Ascending aorta (tissue), 2 donors: ENCODE measurements at regions of chr2 and their contacts with region 1.

Region 1: GRCh38 chr2:201795607-201796477 is 10.5 kb upstream of the CDK15 start:
- DNase-seq: no peak
- H3K4me3 ChIP-seq: no peak overlapping the region
- H3K27ac ChIP-seq: peak overlapping the region; percentile 81 to 86
- H3K4me1 ChIP-seq: peaks cover 4 to 17% of the 10 kb centered on the region in 2 donors
- H3K27me3 ChIP-seq: no peaks in the 10 kb centered on the region
- CTCF ChIP-seq: peak; percentile 58 to 86 (median 65)

Region 2: DNA sequence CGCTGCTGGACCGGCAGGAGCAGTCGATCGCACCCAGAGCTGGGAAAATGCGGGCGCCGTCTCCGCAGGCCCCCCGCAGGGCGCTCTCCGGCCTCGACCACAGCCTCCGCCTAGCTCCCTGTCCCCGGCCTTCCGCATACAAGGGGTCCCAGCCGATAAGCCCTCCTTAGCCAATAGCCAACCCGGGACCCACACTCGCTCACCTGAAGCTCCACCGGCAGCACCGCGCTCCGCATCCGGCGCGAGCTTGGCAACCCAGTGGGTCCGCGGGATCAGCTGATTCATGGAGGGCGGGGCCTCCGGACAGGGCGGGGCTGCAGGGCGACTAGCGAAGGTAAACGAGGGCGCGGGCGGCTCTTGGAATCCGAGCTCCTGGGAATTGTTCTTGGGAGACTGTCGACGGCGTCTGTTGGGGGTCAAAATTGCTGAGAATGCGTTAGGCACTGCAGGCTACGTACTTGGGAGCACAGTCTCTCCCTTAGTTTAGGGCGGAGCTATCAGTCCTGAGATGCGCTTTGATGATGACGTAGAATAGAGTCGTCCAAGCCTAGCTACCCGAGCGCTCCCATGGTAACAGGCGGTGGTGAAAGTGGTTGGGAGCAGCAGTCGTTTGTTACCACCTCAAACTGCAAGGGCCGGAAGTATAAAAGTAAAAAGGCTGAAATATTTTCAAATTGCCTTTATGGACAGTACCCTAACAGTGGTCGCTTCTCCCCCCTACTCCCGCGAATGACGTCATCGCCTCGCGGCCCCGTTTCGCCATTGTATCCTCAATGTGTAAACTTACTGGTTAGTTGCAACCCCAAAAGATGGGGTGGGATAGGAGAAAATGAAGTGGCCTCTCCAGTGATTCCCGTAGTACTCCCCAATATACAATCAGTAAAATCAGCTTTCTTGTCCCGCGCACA is 14.9 kb before region 1 on chr2 and contains the start of gene ALS2:
- intact Hi-C with region 1: loop called (anchors 1 kb)
- DNase-seq: peak; percentile 84 to 99
- H3K4me3 ChIP-seq: peak within 1 kb of the TSS; percentile 67 to 85
- H3K27ac ChIP-seq: peak within 1 kb of the TSS; percentile 84 to 92
- H3K4me1 ChIP-seq: peaks cover 0 to 7% of the 10 kb centered on the region in 2 donors
- H3K27me3 ChIP-seq: no peaks in the 10 kb centered on the region
- CTCF ChIP-seq: no peak
- total RNA-seq, gene ALS2: 6.5 TPM

Region 3: DNA sequence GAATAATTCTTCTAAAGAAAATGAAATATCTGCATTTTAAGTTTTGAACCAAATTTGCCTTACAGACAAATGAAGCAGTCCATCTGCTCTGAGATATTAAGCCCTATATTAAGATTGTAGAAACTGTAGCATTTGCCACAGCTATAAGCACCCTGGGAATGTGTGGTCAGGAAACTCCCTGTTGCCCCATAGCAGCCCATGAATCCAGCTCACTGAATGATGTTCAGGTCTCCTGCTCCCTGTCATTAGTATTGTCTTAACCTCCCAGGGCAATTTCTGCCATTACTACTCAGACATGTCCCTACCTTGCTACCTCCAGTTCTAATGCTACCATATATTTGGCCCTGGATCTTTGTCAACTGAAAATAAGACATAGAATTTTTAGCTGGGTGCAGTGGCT is 51.6 kb after region 1 on chr2:
- intact Hi-C with region 1: loop called (anchors 1 kb)
- DNase-seq: no peak
- H3K4me3 ChIP-seq: no peak overlapping the region
- H3K27ac ChIP-seq: peak overlapping the region in 1 of 2 donors; percentile 14
- H3K4me1 ChIP-seq: peaks cover 0 to 4% of the 10 kb centered on the region in 2 donors
- H3K27me3 ChIP-seq: no peaks in the 10 kb centered on the region
- CTCF ChIP-seq: no peak

Region 4: DNA sequence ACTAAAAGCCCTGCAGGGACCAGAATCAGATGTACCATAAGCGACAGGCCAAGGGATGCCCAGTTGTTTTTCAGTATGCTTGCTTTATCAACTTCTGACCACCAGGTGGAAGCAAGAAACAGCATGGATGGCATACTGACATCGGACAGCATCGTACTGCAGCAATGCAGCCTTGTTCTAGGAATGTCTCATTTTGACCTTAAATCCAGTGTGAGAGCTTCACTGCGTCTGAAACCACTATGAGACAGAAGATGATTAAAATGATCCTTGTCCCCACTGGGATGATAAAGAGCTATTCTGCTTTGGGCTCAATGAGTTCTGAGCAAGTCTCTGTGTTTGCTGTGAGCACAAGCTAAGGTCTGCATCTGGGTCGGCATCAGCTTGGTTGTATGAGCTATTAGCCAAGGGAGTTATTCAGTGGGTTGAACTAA is 64.8 kb after region 1 on chr2:
- intact Hi-C with region 1: loop called (anchors 2 kb)
- DNase-seq: no peak
- H3K4me3 ChIP-seq: no peak overlapping the region
- H3K27ac ChIP-seq: no peak overlapping the region
- H3K4me1 ChIP-seq: no peaks in the 10 kb centered on the region
- H3K27me3 ChIP-seq: no peaks in the 10 kb centered on the region
- CTCF ChIP-seq: peak; percentile 65 to 81 (median 68)

Region 5: DNA sequence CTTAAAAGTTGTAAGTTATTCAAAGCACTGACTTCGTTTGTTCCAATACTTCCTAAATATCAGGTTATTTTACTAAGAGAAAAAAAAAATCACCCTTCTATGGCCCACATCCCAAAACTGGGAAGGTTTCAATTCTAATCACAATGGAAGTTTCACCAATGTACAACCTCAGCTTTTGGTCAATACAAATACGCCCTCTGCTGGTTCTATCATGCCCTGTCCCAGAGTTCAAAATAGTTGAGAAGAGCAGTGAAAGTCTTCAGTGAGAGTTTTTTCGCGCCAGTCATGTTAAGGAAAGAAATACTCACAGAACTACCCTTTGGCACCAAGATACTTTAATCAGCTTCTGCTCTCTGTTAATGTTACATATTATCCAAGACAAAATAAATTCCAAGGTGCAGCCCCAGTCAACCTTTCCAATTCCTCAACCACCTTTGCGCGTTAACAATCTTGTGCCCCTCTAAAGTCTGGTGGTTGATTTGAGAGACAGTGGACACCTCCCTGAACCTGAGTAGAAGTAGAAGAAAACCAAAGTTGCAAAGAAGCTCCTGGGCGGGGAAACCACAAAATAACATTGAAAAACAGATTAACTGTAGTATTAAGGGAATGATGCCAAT is 382.6 kb after region 1 on chr2:
- intact Hi-C with region 1: loop called (anchors 1 kb)
- DNase-seq: peak in 1 of 2 donors; percentile 78
- H3K4me3 ChIP-seq: no peak overlapping the region
- H3K27ac ChIP-seq: no peak overlapping the region
- H3K4me1 ChIP-seq: no peaks in the 10 kb centered on the region
- H3K27me3 ChIP-seq: no peaks in the 10 kb centered on the region
- CTCF ChIP-seq: peak; percentile 72 to 79 (median 78)